ENCODE measurements at regions of chr11 and their contacts with region 1.

Region 1: GRCh38 chr11:67288452-67289225 is 464 bp upstream of the ANKRD13D start:
- DNase-seq: peak; percentile 91
- CTCF ChIP-seq: peak; percentile 47

Region 2: DNA sequence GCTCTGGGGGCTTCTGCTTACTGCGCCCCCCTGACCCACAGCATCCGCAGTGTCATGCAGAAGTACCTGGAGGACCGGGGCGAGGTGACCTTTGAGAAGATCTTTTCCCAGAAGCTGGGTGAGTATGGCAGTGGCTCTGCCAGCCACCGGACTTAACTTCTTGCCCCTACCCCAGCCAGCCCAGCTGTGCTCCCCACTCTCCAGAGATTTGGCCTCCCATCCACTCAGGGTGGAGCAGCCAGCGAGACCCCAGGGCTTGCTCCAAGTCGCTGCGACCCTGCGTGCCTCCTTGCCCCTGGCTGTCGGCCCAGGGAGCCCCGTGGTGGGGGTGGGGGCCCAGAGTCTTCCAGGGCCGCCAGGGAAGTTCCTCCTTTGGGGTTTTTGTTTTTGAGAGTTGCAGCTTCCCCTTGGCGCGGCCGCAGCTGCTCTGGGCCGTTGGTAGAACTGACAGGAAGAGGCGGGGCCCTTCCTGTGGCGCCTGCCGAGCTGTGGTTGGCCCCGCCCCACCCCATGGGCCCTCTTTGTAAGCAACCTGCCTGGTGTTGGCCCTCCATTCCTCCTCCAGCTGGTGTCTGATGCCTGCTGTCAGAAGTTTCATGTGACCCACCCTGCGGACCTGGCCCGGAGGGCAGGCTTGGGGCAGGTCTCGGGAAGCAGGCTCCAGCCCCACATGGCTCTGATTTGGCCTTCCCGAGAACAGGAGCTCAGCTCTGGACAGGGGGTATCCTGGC is 11.2 kb before region 1 on chr11:
- CTCF ChIA-PET with region 1: interaction called, 11 read pairs
- POLR2A ChIA-PET with region 1: interaction called, 12 read pairs
- DNase-seq: peak; percentile 93
- CTCF ChIP-seq: no peak

Region 3: DNA sequence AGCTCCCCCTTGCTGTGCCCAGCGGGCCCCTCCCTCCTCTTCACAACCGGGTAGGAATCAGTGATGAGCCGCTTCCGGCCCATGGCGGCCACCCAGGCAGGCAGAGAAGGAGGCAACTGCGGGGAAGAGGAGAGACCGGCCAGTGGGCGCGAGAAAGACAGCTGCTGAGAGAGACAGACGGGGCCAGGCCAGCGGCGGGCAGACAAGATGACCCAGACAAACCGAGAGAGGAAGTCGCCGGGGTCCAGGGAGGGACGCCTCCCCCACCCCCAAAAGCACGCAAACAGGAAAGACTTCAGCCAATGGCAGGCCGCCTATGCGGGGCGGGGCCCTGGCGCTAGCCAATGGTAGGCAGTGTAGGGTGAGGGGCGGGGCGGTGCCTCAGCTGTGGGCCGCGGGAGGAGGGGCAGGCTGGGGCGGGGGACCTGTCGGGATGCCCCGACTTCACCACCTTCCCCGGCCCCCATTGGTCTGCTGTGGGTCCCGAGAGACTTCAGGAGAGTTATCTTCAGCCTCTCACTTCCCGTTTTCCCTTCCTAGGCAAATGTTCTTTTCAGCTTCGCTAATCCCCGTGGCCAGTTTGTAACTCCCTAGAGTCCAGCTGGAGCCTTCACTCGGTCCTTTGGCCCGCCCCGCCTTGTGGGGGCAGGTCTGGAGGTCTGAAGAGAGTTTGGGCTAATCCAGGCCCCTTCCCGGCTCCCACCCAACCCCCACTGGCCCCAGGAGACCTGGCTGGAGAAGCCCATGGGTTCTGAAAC is 64.9 kb after region 1 on chr11 and contains the start of gene POLD4:
- CTCF ChIA-PET with region 1: interaction called, 10 read pairs
- POLR2A ChIA-PET with region 1: no interaction called
- DNase-seq: peak; percentile 98
- CTCF ChIP-seq: no peak

Measured in GM10248 (cell line).